Testis (tissue), 5 donors: ENCODE measurements at regions of chr5 and their contacts with region 1.

Region 1: DNA sequence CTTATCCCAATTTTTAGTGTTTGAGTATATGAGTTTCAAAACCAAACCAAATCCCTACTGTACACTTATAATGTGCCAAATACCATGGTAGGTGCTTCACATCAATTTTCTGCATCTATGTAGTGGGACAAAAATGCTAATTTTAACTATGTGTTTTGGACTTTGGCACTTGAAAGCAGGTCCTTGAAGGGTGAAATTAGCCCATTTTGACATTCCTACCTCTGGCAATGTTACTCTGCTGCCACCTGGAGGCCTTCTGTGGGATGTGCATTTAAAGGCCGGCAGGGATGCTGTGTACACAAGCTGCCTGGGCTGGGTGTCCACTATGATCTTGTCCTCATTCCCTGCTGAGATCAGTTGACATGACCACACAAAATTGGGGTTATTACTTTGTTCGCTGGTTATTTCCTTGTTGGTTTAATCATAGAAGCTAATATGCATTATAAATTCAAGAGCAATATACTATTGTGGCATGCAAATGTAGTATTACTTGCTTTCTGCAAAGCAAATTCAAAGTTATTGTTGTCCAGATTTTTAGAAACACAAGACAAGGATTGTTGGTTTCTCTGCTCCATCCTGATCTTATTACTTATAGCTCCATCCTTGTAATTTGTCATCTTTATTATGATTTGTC is 166.8 kb downstream of the ARHGEF28 start:
- DNase-seq: peak; percentile 88
- H3K4me3 ChIP-seq: no peak overlapping the region
- H3K27ac ChIP-seq: no peak overlapping the region
- H3K4me1 ChIP-seq: no peaks in the 10 kb centered on the region
- H3K27me3 ChIP-seq: no peaks in the 10 kb centered on the region
- CTCF ChIP-seq: peak; percentile 92 to 97 (median 92)
- POLR2A ChIP-seq: no peak

Region 2: DNA sequence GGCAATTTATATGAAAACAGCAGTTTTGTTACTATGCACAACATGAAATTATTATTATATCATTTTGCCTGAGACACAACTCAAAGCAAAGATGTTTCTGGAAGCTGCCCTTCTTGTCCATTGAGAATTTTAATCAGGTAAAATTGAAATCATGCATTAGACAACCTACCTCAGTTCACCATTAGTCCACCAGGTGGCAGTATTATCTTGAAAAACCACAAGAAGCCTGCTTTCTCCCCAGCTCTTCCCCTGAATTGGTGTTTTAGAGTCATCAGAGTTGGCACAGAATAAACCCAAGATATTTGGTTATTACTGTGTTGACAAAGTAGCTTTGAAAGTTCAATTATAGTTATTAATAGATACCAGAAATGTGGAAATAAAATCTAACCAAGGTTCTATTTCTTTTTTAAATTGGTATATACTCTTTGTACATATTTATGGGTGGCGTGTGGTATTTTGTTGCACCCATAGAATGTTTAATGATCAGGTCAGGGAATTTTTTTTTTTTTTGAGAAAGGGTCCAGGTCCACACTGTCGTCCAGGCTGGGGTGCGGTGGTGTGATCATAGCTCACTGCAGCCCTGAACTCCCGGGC is 201.6 kb before region 1 on chr5:
- intact Hi-C with region 1: loop called (anchors 2 kb)
- DNase-seq: peak; percentile 70
- H3K4me3 ChIP-seq: no peak overlapping the region
- H3K27ac ChIP-seq: no peak overlapping the region
- H3K4me1 ChIP-seq: no peaks in the 10 kb centered on the region
- H3K27me3 ChIP-seq: no peaks in the 10 kb centered on the region
- CTCF ChIP-seq: peak; percentile 91 to 97 (median 97)
- POLR2A ChIP-seq: no peak